B cell (primary cell): ENCODE measurements at regions of chr15 and their contacts with region 1.

Region 1: DNA sequence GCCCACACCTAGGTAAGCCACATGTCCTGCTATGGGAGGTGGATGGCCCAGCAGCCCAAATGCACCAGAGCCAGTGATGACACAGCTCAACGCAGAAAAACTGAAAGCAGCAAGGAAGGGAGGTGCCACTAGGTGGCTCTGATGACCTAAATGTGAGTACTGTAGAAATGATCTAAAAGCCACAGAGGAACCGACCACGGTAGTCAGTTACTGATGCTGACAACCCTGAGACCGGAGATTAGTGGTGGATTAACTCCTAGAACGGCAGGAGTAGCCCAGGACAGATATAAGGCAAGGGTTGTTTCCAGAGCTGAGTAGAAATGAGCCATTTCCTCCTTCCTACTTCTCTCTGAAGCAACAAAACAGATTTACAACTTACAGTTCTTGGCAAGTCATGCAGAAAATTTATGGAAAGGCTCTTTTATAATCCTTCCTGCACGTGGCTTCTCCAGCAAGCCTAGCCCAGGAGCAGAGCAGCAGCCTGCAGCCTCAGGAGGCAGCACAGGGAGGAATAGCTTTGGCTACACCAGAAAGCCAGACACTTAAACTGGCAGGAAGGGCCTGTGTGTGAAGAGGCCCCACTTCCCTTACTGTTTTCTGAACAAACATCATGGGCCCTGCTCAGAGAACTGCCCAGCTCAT is 13.1 kb downstream of the FBXL22 start:
- DNase-seq: peak; percentile 81
- ATAC-seq: peak; percentile 94
- H3K4me3 ChIP-seq: no peak overlapping the region
- H3K4me3 Mint-ChIP-seq: no peak overlapping the region
- H3K27ac ChIP-seq: peak overlapping the region; percentile 56 to 77
- H3K27ac Mint-ChIP-seq: peak overlapping the region; percentile 78
- H3K4me1 ChIP-seq: peaks cover 23 to 25% of the 10 kb centered on the region in 2 donors
- H3K4me1 Mint-ChIP-seq: peaks cover 24% of the 10 kb centered on the region
- H3K27me3 ChIP-seq: no peaks in the 10 kb centered on the region
- H3K27me3 Mint-ChIP-seq: no peaks in the 10 kb centered on the region
- CTCF ChIP-seq: peak; percentile 83

Region 2: DNA sequence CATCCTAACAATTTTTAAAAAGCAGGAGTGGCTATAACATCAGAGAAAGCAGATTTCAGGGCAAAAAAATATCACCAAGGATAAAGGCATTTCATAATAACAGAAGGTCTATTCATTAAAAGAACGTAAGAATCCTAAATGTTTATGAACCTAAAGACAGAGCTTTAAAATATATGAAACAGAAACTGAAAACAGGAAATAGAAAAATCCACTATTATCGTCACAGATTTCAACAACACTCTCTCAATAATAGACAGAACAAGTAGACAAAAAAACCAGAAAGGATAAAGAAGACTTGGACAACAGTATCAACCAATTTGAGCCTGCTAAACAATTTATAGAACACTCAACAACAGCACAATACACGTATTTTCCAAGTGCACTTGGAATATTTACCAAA is 58.3 kb after region 1 on chr15:
- CTCF ChIA-PET with region 1: interaction called, 8 read pairs
- POLR2A ChIA-PET with region 1: no interaction called
- intact Hi-C with region 1: loop called (anchors 10 kb)
- DNase-seq: peak; percentile 63
- ATAC-seq: peak; percentile 89
- H3K4me3 ChIP-seq: peak overlapping the region in 3 of 5 experiments; percentile 4 to 55 (median 30)
- H3K4me3 Mint-ChIP-seq: peak overlapping the region; percentile 66
- H3K27ac ChIP-seq: peak overlapping the region; percentile 83 to 85
- H3K27ac Mint-ChIP-seq: peak overlapping the region; percentile 75
- H3K4me1 ChIP-seq: peaks cover 12 to 14% of the 10 kb centered on the region in 2 donors
- H3K4me1 Mint-ChIP-seq: peaks cover 27% of the 10 kb centered on the region
- H3K27me3 ChIP-seq: no peaks in the 10 kb centered on the region
- H3K27me3 Mint-ChIP-seq: no peaks in the 10 kb centered on the region
- CTCF ChIP-seq: no peak